K562 (cell line): ENCODE measurements at regions of chr6 and their contacts with region 1.

Region 1: GRCh38 chr6:15245361-15246216 is at the start of gene JARID2:
- DNase-seq: peak; percentile 75 to 99 (median 88)
- ATAC-seq: peak; percentile 74
- H3K4me3 ChIP-seq: peak within 1 kb of the TSS; percentile 78
- H3K27ac ChIP-seq: peak within 1 kb of the TSS; percentile 94
- H3K4me1 ChIP-seq: peaks cover 20 to 24% of the 10 kb centered on the region in 2 experiments
- H3K27me3 ChIP-seq: no peaks in the 10 kb centered on the region
- CTCF ChIP-seq: no peak
- EP300 ChIP-seq: 0 out of 2 replicates have a peak, but pooled peaks have one; percentile 14
- POLR2A ChIP-seq: peak; percentile 86
- RAD21 ChIP-seq: no peak; a peak in 1 of 4 replicates
- polyA plus RNA-seq, gene JARID2: 5.0 to 6.7 TPM

Region 2: GRCh38 chr6:14865531-14866100 is 380.0 kb before region 1 on chr6:
- CTCF ChIA-PET with region 1: no interaction called
- POLR2A ChIA-PET with region 1: no interaction called
- in situ Hi-C with region 1: no loop called
- intact Hi-C with region 1: loop called (anchors 5 kb)
- DNase-seq: peak in 3 of 4 experiments; percentile 25 to 32 (median 29)
- ATAC-seq: peak; percentile 64
- H3K4me3 ChIP-seq: no peak overlapping the region
- H3K27ac ChIP-seq: no peak overlapping the region
- H3K4me1 ChIP-seq: peaks cover 4 to 31% of the 10 kb centered on the region in 2 experiments; a peak in 4 of 5 replicates
- H3K27me3 ChIP-seq: no peaks in the 10 kb centered on the region
- CTCF ChIP-seq: no peak
- EP300 ChIP-seq: no peak
- POLR2A ChIP-seq: no peak
- RAD21 ChIP-seq: 0 out of 4 replicates have a peak, but pooled peaks of 1 of the 2 experiments have one; percentile 18

Region 3: GRCh38 chr6:15090145-15090579 is 155.4 kb before region 1 on chr6:
- CTCF ChIA-PET with region 1: no interaction called
- POLR2A ChIA-PET with region 1: interaction called, 13 read pairs
- in situ Hi-C with region 1: no loop called
- intact Hi-C with region 1: loop called (anchors 2 kb)
- DNase-seq: peak in 2 of 4 experiments; percentile 90 to 93
- ATAC-seq: peak; percentile 76
- H3K4me3 ChIP-seq: peak overlapping the region; percentile 48
- H3K27ac ChIP-seq: peak overlapping the region; percentile 96
- H3K4me1 ChIP-seq: peaks cover 28 to 49% of the 10 kb centered on the region in 2 experiments
- H3K27me3 ChIP-seq: no peaks in the 10 kb centered on the region; a peak in 1 of 5 replicates
- CTCF ChIP-seq: no peak
- EP300 ChIP-seq: peak; percentile 52
- POLR2A ChIP-seq: peak; percentile 82
- RAD21 ChIP-seq: peak; percentile 18 to 29; a peak in 2 of 4 replicates

Region 4: DNA sequence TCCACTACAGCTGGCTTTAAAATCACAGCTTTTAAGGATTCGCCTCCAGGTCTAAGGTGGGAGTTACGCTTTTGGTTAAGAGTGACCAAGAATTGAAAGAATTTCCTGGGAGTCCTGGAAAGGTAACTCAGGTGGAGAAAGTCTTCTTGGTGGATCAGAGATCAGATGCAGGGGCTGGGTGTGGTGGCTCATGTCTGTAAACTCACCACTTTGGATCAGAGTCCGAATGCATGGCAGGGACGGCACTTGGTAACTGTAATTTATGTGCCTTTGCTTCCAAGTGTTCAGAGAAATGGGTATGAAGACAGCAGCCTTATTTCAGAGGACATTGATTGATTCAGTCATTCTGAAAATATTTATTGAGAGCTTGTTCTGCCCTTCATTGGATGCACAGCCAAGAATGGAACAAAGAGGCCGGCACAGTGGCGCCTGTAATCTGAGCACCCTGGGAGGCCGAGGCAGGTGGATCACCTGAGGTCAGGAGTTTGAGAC is 17.7 kb before region 1 on chr6:
- CTCF ChIA-PET with region 1: no interaction called
- POLR2A ChIA-PET with region 1: interaction called, 28 read pairs
- in situ Hi-C with region 1: no loop called
- intact Hi-C with region 1: no loop called
- DNase-seq: no peak
- ATAC-seq: no peak
- H3K4me3 ChIP-seq: no peak overlapping the region
- H3K27ac ChIP-seq: no peak overlapping the region
- H3K4me1 ChIP-seq: no peaks in the 10 kb centered on the region
- H3K27me3 ChIP-seq: no peaks in the 10 kb centered on the region
- CTCF ChIP-seq: no peak
- EP300 ChIP-seq: no peak
- POLR2A ChIP-seq: no peak
- RAD21 ChIP-seq: no peak

Region 5: DNA sequence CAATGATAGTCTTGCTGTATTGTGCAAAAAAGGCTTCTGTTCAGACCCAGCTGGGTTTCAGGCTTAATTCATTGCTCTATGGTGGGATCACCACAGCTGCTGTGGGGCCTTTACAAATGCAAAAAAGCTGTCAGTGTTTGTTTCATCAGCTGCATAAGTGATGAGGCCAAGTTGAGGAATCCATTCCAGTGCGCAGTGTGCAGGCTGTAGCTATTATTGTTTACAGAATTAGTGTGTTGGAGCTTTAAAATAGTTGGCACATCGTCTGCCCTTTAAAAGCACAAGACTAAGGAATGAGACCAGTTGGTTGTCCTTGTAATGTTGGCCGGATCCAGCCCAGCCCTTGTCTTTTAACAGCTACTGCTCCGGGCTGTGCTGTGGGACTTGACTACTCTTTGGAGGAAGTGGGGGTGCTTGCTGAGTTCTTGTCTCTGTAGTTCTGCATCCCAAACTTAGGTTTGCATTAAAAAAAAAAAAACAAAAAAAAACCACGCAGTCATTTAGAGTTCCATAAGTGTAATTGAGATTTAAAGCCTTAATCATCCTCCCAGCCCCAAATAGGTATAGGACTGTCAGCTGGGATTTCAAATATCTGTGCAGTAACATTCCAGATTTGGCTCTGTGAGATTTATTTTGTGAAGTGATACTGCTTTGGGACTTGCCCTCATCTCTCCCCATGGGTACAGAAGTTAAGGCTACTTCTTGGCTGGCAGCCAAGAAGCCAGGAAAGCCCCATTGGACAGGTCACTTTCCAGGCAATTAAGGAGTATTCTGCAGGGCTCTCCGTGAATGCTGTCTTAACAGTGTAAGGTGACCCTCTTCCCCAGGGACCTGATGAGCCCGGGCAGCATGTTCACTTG is 19.5 kb after region 1 on chr6:
- CTCF ChIA-PET with region 1: no interaction called
- POLR2A ChIA-PET with region 1: interaction called, 19 read pairs
- in situ Hi-C with region 1: no loop called
- intact Hi-C with region 1: loop called (anchors 2 kb)
- DNase-seq: peak; percentile 51 to 63 (median 56)
- ATAC-seq: peak; percentile 31
- H3K4me3 ChIP-seq: no peak overlapping the region
- H3K27ac ChIP-seq: peak overlapping the region; percentile 56; the same call in 1 of the 3 replicates
- H3K4me1 ChIP-seq: peaks cover 39 to 70% of the 10 kb centered on the region in 2 experiments
- H3K27me3 ChIP-seq: no peaks in the 10 kb centered on the region
- CTCF ChIP-seq: no peak
- EP300 ChIP-seq: no peak
- POLR2A ChIP-seq: no peak
- RAD21 ChIP-seq: 0 out of 4 replicates have a peak, but pooled peaks of 1 of the 2 experiments have one; percentile 4

Region 6: GRCh38 chr6:15479761-15480160 is 234.2 kb after region 1 on chr6:
- CTCF ChIA-PET with region 1: no interaction called
- POLR2A ChIA-PET with region 1: no interaction called
- in situ Hi-C with region 1: no loop called
- intact Hi-C with region 1: loop called (anchors 5 kb)
- DNase-seq: no peak
- ATAC-seq: no peak
- H3K4me3 ChIP-seq: no peak overlapping the region
- H3K27ac ChIP-seq: no peak overlapping the region
- H3K4me1 ChIP-seq: peaks cover 3 to 14% of the 10 kb centered on the region in 2 experiments; a peak in 3 of 5 replicates
- H3K27me3 ChIP-seq: no peaks in the 10 kb centered on the region
- CTCF ChIP-seq: no peak
- EP300 ChIP-seq: no peak
- POLR2A ChIP-seq: no peak
- RAD21 ChIP-seq: no peak